ENCODE measurements at regions of chr3 and their contacts with region 1.

Region 1: DNA sequence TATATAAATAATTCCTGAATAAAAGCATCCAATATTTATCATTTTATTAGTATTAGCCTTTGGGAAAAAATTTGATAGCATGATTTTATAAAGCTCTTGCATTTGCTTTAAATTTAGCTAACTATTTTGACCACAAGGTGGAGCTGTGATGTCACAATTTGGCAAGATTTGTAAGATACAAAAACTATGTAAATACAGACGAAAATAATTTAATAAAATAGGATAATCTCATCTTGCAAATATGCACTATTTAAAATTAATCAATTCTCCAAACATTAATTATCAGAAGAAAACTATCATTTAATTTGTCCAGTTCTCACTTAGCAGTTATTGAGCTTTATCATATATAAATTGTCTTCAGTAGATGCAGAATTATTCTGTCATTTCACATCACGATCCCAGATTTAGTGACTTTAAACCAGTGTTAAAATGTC is 95.4 kb downstream of the PLOD2 start:
- DNase-seq: peak; percentile 7
- ATAC-seq: no peak
- H3K4me3 Mint-ChIP-seq: no peak overlapping the region
- H3K27ac Mint-ChIP-seq: no peak overlapping the region
- H3K4me1 Mint-ChIP-seq: no peaks in the 10 kb centered on the region
- H3K27me3 Mint-ChIP-seq: no peaks in the 10 kb centered on the region

Region 2: GRCh38 chr3:146052791-146053310 is 12.7 kb before region 1 on chr3:
- CTCF ChIA-PET with region 1: interaction called, 11 read pairs
- POLR2A ChIA-PET with region 1: no interaction called
- intact Hi-C with region 1: no loop called
- DNase-seq: no peak
- ATAC-seq: no peak
- H3K4me3 Mint-ChIP-seq: no peak overlapping the region
- H3K27ac Mint-ChIP-seq: no peak overlapping the region
- H3K4me1 Mint-ChIP-seq: no peaks in the 10 kb centered on the region
- H3K27me3 Mint-ChIP-seq: no peaks in the 10 kb centered on the region

Region 3: DNA sequence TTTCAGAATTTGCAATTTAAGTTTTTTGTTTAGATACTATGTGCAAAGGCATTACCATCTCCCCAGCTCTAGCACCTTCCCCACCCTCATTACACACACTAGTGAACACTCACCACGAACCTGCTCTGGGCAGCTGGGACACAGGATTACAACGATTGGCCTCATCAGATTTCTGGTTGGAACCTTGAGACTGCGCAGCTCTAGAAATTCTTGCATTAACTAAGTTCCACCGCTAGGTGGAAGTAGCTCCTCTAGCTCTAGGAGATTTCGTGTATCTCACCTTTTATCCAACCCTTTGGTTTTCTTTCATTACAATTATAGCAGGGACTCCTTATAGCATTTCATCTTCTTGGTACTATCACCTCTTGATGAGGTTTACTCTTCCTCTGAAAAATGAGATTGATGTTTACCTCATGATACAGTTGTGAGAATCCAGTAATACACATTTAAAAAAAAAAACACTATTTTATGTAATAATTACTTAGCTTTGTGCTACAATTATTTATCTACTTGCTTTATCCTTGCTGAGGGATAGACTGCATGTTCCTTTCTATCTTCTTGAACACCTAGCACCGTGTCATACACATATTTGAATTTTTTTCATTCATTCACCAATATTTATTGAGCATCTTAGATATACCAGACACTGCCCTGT is 124.1 kb after region 1 on chr3:
- CTCF ChIA-PET with region 1: interaction called, 43 read pairs
- POLR2A ChIA-PET with region 1: no interaction called
- intact Hi-C with region 1: loop called (anchors 1 kb)
- DNase-seq: no peak
- ATAC-seq: peak; percentile 76
- H3K4me3 Mint-ChIP-seq: no peak overlapping the region
- H3K27ac Mint-ChIP-seq: no peak overlapping the region
- H3K4me1 Mint-ChIP-seq: no peaks in the 10 kb centered on the region
- H3K27me3 Mint-ChIP-seq: peaks cover 10% of the 10 kb centered on the region

Region 4: GRCh38 chr3:146326670-146327543 is 261.3 kb after region 1 on chr3:
- CTCF ChIA-PET with region 1: interaction called, 5 read pairs
- POLR2A ChIA-PET with region 1: no interaction called
- intact Hi-C with region 1: loop called in 1 of 2 experiments (anchors 10 kb)
- DNase-seq: no peak
- ATAC-seq: no peak
- H3K4me3 Mint-ChIP-seq: no peak overlapping the region
- H3K27ac Mint-ChIP-seq: no peak overlapping the region
- H3K4me1 Mint-ChIP-seq: no peaks in the 10 kb centered on the region
- H3K27me3 Mint-ChIP-seq: peaks cover 4% of the 10 kb centered on the region

Region 5: GRCh38 chr3:146577662-146578061 is 512.1 kb after region 1 on chr3:
- CTCF ChIA-PET with region 1: interaction called, 10 read pairs
- POLR2A ChIA-PET with region 1: no interaction called
- intact Hi-C with region 1: loop called (anchors 5 kb)
- DNase-seq: peak; percentile 40
- ATAC-seq: no peak
- H3K4me3 Mint-ChIP-seq: no peak overlapping the region
- H3K27ac Mint-ChIP-seq: no peak overlapping the region
- H3K4me1 Mint-ChIP-seq: no peaks in the 10 kb centered on the region
- H3K27me3 Mint-ChIP-seq: no peaks in the 10 kb centered on the region

Region 6: DNA sequence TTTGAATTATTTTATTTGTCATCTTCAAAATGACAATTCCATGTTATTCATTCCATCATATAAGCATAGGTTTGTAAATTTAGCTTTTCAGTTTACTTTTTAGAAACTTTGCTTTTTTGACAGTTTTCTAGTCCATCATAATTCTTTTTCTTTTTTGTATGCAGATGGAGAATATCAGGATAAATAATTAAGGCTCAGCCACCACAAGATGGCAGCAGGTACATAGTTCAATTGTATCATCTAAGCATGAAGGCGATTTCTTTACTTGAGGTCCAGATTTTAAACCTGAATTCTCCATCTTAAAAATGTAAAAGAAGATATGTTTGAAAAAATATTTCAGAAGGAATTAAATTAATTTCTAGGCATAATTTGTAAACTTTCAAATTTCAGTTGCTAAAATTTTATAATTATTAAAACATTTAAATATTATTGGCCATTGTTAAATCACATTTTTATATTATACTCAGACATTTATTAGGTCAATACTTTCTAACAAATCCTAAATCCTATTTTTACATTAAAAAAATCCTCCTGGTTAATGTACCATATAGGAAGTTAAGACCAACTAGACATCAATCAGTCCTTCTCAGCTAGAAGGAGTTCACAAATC is 524.4 kb after region 1 on chr3:
- CTCF ChIA-PET with region 1: no interaction called
- POLR2A ChIA-PET with region 1: no interaction called
- intact Hi-C with region 1: loop called in 1 of 2 experiments (anchors 5 kb)
- DNase-seq: peak; percentile 35
- ATAC-seq: no peak
- H3K4me3 Mint-ChIP-seq: no peak overlapping the region
- H3K27ac Mint-ChIP-seq: no peak overlapping the region
- H3K4me1 Mint-ChIP-seq: no peaks in the 10 kb centered on the region
- H3K27me3 Mint-ChIP-seq: peaks cover 9% of the 10 kb centered on the region

Region 7: DNA sequence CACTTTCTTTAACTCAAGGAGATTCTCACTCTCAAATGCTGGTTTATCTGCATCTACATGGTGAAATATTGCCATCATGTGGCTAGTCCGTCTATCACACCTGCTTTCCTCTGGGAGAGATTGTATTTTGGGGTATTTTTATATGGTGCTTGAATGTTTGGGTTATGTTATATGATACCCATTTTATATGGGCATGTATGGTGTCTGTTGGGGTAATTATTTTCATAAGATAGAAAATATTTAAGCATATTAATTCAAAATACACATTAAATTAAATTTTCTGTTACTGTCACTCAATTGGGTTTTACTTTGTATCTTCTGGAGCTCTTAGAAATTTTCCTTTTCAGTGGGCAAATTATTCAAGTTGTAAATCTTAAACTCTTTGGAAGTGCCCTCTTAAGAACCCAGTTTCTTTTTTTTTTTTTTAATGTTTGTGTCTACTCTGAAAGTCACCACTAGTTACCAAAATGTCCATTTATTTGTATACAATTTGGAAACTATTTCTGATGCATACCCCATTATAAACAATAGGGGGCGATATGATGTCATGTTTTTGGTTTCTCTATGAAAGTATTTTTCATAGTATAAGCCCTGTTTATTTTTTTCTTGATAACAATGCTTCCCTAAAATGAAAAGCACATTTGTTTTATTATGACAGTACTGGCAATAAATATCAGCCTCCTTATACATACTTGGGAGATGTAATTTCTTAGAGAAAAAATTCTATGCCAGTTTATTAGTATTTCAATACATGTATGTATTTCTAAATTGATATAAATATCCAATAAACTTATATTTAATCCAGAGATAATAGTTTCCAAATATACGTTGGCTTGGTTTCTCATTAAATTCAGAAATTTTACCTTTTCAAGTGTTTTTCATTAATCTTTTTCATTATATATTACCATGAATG is 575.6 kb after region 1 on chr3:
- CTCF ChIA-PET with region 1: interaction called, 3 read pairs
- POLR2A ChIA-PET with region 1: no interaction called
- intact Hi-C with region 1: loop called in 1 of 2 experiments (anchors 2 kb)
- DNase-seq: peak; percentile 22
- ATAC-seq: peak; percentile 49
- H3K4me3 Mint-ChIP-seq: no peak overlapping the region
- H3K27ac Mint-ChIP-seq: no peak overlapping the region
- H3K4me1 Mint-ChIP-seq: no peaks in the 10 kb centered on the region
- H3K27me3 Mint-ChIP-seq: peaks cover 10% of the 10 kb centered on the region